PC-9 (cell line): ENCODE measurements at regions of chr20 and their contacts with region 1.

Region 1: GRCh38 chr20:38057351-38057972 is 23.9 kb downstream of the RPRD1B start:
- DNase-seq: peak; percentile 53 to 76
- H3K4me3 ChIP-seq: no peak overlapping the region
- H3K27ac ChIP-seq: no peak overlapping the region
- H3K4me1 ChIP-seq: no peaks in the 10 kb centered on the region
- H3K27me3 ChIP-seq: no peaks in the 10 kb centered on the region
- CTCF ChIP-seq: peak; percentile 99

Region 2: GRCh38 chr20:37265152-37265551 is 792.3 kb before region 1 on chr20:
- CTCF ChIA-PET with region 1: no interaction called
- POLR2A ChIA-PET with region 1: no interaction called
- intact Hi-C with region 1: loop called (anchors 5 kb)
- DNase-seq: no peak
- H3K4me3 ChIP-seq: no peak overlapping the region
- H3K27ac ChIP-seq: no peak overlapping the region
- H3K4me1 ChIP-seq: no peaks in the 10 kb centered on the region
- H3K27me3 ChIP-seq: peaks cover 17% of the 10 kb centered on the region
- CTCF ChIP-seq: no peak

Region 3: GRCh38 chr20:37564388-37565133 is 492.9 kb before region 1 on chr20:
- CTCF ChIA-PET with region 1: no interaction called
- POLR2A ChIA-PET with region 1: no interaction called
- intact Hi-C with region 1: loop called (anchors 5 kb)
- DNase-seq: peak in 1 of 2 experiments; percentile 61
- H3K4me3 ChIP-seq: no peak overlapping the region
- H3K27ac ChIP-seq: no peak overlapping the region
- H3K4me1 ChIP-seq: no peaks in the 10 kb centered on the region
- H3K27me3 ChIP-seq: peaks cover 49% of the 10 kb centered on the region
- CTCF ChIP-seq: peak; percentile 95

Region 4: DNA sequence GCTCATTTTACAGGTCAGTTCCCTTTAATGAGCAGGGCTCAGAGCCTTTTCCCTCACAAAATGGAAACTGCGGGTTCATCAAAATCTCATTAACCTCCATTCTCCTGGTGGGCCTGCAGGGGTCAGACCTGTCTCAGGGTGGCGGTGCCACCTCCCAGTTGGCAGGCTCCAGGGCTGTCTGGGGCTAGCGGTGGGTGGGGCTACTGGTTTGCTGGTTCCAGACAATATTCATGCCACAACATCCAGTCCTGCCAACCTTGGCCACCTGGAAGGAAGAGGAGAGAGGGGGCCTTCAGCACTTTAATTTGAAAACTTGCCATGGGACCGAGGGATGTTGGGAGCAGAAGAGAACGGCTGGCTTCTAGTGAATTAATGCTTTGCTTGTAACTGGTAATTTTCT is 405.5 kb before region 1 on chr20:
- CTCF ChIA-PET with region 1: no interaction called
- POLR2A ChIA-PET with region 1: no interaction called
- intact Hi-C with region 1: loop called (anchors 10 kb)
- DNase-seq: peak in 1 of 2 experiments; percentile 68
- H3K4me3 ChIP-seq: no peak overlapping the region
- H3K27ac ChIP-seq: no peak overlapping the region
- H3K4me1 ChIP-seq: no peaks in the 10 kb centered on the region
- H3K27me3 ChIP-seq: peaks cover 6% of the 10 kb centered on the region
- CTCF ChIP-seq: peak; percentile 67

Region 5: GRCh38 chr20:38073307-38074071 is 16.0 kb after region 1 on chr20:
- CTCF ChIA-PET with region 1: interaction called, 16 read pairs
- POLR2A ChIA-PET with region 1: interaction called, 4 read pairs
- intact Hi-C with region 1: loop called (anchors 2 kb)
- DNase-seq: peak; percentile 63 to 80
- H3K4me3 ChIP-seq: no peak overlapping the region
- H3K27ac ChIP-seq: peak overlapping the region; percentile 53
- H3K4me1 ChIP-seq: peaks cover 26% of the 10 kb centered on the region
- H3K27me3 ChIP-seq: no peaks in the 10 kb centered on the region
- CTCF ChIP-seq: peak; percentile 85

Region 6: GRCh38 chr20:38321959-38322598 is 264.6 kb after region 1 on chr20:
- CTCF ChIA-PET with region 1: interaction called, 3 read pairs
- POLR2A ChIA-PET with region 1: no interaction called
- intact Hi-C with region 1: loop called (anchors 1 kb)
- DNase-seq: peak in 1 of 2 experiments; percentile 47
- H3K4me3 ChIP-seq: no peak overlapping the region
- H3K27ac ChIP-seq: no peak overlapping the region
- H3K4me1 ChIP-seq: no peaks in the 10 kb centered on the region
- H3K27me3 ChIP-seq: peaks cover 49% of the 10 kb centered on the region
- CTCF ChIP-seq: peak; percentile 81

Region 7: DNA sequence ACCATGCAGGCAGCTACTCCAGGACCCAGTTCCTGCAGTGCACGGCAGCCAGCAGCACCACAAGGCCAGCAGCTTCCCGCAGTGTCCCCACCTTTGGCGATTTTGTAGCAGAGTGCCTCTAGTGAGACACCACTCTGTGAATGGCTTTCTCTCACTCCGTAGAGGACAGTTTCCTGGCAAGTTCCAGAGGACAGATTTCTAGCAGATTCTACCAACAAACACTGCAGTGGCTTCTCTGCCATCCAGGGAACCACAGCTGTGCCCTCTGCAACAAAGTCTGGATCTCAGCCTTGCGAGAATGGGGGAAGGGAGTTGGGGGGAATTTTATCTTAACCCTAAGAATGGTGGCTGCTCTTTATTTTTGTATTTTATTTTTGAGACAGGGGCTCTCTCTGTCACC is 349.0 kb after region 1 on chr20:
- CTCF ChIA-PET with region 1: no interaction called
- POLR2A ChIA-PET with region 1: no interaction called
- intact Hi-C with region 1: loop called (anchors 5 kb)
- DNase-seq: no peak
- H3K4me3 ChIP-seq: no peak overlapping the region
- H3K27ac ChIP-seq: no peak overlapping the region
- H3K4me1 ChIP-seq: no peaks in the 10 kb centered on the region
- H3K27me3 ChIP-seq: no peaks in the 10 kb centered on the region
- CTCF ChIP-seq: no peak